ENCODE measurements at regions of chr7 and their contacts with region 1.

Region 1: DNA sequence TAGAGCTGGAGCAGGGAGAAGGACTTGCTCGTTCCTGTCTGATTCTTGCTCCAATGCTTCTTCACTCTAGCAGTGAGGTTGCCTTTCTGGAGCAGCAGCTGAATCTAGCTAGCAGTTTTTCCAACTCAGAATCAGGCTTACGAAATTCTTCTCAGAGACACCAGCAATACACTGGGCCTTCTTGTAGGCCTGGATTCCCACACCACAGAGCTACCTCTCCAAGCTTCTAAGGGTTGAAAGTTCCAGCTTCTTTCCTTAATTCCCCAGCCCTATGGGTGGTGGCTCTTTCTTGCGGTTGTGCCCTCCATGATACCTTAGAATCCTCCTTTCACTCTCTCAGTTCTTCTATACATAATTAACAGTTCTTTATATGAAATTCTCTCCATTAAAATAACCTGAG is 586.6 kb downstream of the INHBA start:
- DNase-seq: no peak
- H3K4me3 ChIP-seq: no peak overlapping the region
- H3K27ac ChIP-seq: no peak overlapping the region
- H3K4me1 ChIP-seq: no peaks in the 10 kb centered on the region
- H3K27me3 ChIP-seq: no peaks in the 10 kb centered on the region
- CTCF ChIP-seq: no peak

Region 2: GRCh38 chr7:40859965-40860543 is 256.3 kb before region 1 on chr7:
- CTCF ChIA-PET with region 1: no interaction called
- POLR2A ChIA-PET with region 1: interaction called, 17 read pairs
- intact Hi-C with region 1: no loop called
- DNase-seq: no peak
- H3K4me3 ChIP-seq: no peak overlapping the region
- H3K27ac ChIP-seq: no peak overlapping the region
- H3K4me1 ChIP-seq: no peaks in the 10 kb centered on the region
- H3K27me3 ChIP-seq: no peaks in the 10 kb centered on the region
- CTCF ChIP-seq: no peak

Region 3: DNA sequence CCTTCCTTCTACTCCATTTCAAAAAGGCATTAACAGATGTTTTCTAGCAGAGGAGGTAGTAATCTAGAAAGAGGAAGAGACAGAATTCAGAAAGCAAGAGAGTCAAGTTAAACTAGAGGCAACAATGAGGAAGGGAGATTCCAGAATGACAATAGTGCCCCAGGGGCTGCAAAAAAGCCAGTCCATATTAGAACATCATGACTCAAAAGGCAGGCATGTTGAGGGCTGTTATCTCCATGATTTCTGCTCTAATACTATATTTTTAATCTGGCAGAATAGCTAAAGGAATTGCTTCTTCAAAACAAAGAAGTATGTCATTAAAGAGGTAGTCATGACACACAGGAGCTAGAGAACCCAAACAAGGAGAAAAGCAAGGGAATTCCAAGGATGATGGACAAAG is 13.0 kb before region 1 on chr7:
- CTCF ChIA-PET with region 1: no interaction called
- POLR2A ChIA-PET with region 1: no interaction called
- intact Hi-C with region 1: no loop called
- DNase-seq: no peak
- H3K4me3 ChIP-seq: no peak overlapping the region
- H3K27ac ChIP-seq: no peak overlapping the region
- H3K4me1 ChIP-seq: no peaks in the 10 kb centered on the region
- H3K27me3 ChIP-seq: no peaks in the 10 kb centered on the region
- CTCF ChIP-seq: no peak

Region 4: GRCh38 chr7:41779918-41780317 is 663.6 kb after region 1 on chr7:
- CTCF ChIA-PET with region 1: no interaction called
- POLR2A ChIA-PET with region 1: no interaction called
- intact Hi-C with region 1: no loop called
- DNase-seq: no peak
- H3K4me3 ChIP-seq: no peak overlapping the region
- H3K27ac ChIP-seq: no peak overlapping the region
- H3K4me1 ChIP-seq: no peaks in the 10 kb centered on the region
- H3K27me3 ChIP-seq: no peaks in the 10 kb centered on the region
- CTCF ChIP-seq: no peak